ENCODE measurements at regions of chr1 and their contacts with region 1.

Region 1: DNA sequence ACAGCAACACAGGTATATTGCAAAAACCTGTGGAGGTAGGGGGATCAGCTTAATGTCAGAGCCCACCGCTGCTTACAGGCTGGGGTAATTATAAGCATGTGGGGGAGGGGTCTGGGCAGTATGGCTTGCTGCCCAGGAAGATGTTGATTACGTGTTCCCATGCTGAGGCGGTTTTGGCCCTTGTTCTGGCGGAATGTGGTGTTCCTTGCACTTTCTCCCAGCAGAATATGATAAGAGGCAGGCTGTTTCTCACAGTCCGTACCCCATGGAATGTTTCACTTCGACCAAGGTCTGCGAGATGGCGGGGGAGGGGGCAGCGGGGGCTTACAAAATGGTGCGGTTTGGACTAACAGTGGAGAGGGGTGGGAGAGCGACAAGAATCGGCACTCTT is 9.8 kb upstream of the HPCAL4 start:
- DNase-seq: no peak
- H3K4me3 Mint-ChIP-seq: no peak overlapping the region
- H3K27ac Mint-ChIP-seq: no peak overlapping the region
- H3K4me1 Mint-ChIP-seq: no peaks in the 10 kb centered on the region
- H3K27me3 Mint-ChIP-seq: peaks cover 2% of the 10 kb centered on the region

Region 2: GRCh38 chr1:39672551-39672947 is 28.5 kb before region 1 on chr1:
- CTCF ChIA-PET with region 1: interaction called, 12 read pairs
- POLR2A ChIA-PET with region 1: no interaction called
- intact Hi-C with region 1: no loop called
- DNase-seq: peak; percentile 54
- H3K4me3 Mint-ChIP-seq: peak overlapping the region; percentile 36
- H3K27ac Mint-ChIP-seq: no peak overlapping the region
- H3K4me1 Mint-ChIP-seq: peaks cover 3% of the 10 kb centered on the region
- H3K27me3 Mint-ChIP-seq: peaks cover 25% of the 10 kb centered on the region